ENCODE measurements at regions of chr10 and their contacts with region 1.

Region 1: DNA sequence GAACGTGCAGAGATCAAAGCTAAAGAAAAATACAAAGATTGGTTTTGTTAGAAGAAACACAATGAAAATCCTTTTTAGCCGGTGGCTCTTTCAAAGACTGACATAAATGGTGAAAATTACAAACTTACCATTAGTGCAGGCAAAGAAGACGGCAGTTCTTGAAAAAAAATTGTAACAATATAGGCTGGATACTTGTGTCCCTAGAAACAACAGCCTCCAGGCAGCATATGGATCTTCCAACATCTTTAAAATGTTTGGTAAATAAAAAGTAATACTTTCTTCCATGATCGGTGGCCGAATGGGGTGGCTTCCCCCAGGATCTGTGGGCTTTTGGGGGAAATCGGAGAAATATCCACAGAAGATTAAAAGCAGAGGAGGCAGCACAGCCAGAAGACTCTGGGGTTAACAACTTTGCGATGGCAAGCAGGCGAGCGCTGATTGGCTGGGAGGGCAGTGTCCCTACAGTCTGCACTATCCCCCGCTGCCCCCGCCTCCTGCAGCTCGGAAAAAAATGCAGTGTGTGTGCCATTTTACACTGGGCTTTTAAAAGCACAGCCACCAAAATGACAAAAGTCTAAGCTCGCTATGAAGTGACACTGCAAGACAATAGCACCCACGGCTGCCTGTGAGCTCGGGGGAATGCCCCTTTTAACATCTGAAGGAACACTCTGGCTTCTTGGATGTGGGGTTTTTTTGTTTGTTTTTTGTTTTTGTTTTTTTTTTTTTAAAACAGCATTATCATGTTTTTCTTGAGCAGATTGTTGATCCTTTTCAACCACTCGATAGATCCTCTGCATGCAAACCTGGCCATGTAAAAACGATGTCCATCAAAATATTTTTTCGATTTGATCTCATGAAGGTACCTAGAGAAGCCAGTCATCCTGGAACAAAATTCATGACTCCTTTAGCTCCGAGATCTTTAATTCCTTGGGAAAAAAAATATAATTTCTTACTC is 31.7 kb upstream of the EPC1 start:
- DNase-seq: peak; percentile 95
- H3K4me3 ChIP-seq: peak overlapping the region; percentile 76
- H3K27ac ChIP-seq: peak overlapping the region; percentile 88
- H3K4me1 ChIP-seq: peaks cover 41% of the 10 kb centered on the region
- H3K27me3 ChIP-seq: no peaks in the 10 kb centered on the region
- CTCF ChIP-seq: no peak

Region 2: DNA sequence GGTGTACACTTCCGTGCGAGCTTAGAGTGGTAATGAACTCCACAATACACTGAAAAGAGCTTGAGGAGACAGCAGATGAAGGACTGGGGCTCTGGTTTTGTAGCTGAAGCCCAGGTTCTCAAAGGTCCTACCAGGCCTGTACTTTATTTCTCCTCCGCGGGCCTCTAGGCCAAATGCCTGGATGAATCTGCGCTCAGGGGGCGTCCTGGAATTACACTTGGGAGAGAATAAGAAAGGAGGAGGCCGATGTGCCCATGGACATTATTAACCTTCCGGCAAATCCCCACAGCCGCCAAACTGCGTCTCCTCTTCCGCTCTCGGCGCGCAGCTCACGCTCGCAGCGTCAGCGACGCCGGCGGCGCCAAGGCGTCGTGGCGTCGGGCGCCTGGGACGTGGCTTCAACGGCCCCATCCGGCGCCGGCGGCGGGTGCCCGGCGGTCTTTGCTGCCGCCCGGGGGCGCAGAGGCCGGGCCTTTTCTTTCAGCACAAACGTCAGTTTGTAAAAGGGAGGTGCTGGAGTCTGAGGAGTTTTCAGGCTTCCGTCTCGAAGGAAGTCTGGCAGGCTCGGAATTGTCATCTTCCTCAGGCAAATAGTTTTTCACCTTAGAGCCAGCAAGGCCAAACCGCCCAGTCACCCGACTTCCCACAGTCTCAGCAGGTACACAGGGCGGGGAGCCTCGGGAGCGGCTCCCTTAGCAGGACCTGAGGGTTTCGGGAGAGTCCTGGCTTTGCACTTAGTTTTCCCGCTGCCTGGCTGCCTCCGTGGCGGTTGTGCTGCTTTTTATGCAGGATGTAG is 67.3 kb after region 1 on chr10 and contains the start of gene CCDC7:
- intact Hi-C with region 1: loop called (anchors 5 kb)
- DNase-seq: peak; percentile 89
- H3K4me3 ChIP-seq: peak within 1 kb of the TSS; percentile 80
- H3K27ac ChIP-seq: peak within 1 kb of the TSS; percentile 99
- H3K4me1 ChIP-seq: peaks cover 26% of the 10 kb centered on the region
- H3K27me3 ChIP-seq: no peaks in the 10 kb centered on the region
- CTCF ChIP-seq: peak; percentile 72
- total RNA-seq, gene CCDC7: 24.7 TPM

Measured in left ventricle myocardium inferior (tissue), 1 donor.